ENCODE measurements at regions of chr3 and their contacts with region 1.

Region 1: GRCh38 chr3:189375532-189375931 is 203.8 kb downstream of the TPRG1 start:
- DNase-seq: no peak
- H3K4me3 ChIP-seq: no peak overlapping the region
- H3K27ac ChIP-seq: no peak overlapping the region
- H3K4me1 ChIP-seq: no peaks in the 10 kb centered on the region
- H3K27me3 ChIP-seq: no peaks in the 10 kb centered on the region
- CTCF ChIP-seq: no peak
- EP300 ChIP-seq: no peak
- POLR2A ChIP-seq: no peak

Region 2: DNA sequence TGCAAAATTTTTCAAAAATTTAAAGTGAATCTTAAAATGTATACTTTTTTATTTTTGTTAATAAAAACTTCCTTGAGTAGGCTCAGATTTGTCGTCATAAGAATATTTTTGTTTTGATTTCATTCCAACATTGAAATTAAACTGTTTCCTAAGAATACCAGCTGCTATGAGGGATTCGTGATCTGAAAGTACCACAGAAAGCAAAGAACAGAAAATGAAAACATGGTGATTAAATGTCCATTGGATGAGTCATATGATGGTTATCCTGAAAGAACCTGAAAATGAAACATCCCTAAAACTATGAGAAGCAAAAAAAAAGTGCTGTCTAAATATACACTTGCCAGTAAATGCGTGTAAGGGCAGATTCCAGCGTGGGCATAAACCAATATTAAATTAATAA is 1343.1 kb after region 1 on chr3:
- in situ Hi-C with region 1: no loop called
- intact Hi-C with region 1: loop called (anchors 5 kb)
- DNase-seq: no peak
- H3K4me3 ChIP-seq: no peak overlapping the region
- H3K27ac ChIP-seq: no peak overlapping the region
- H3K4me1 ChIP-seq: no peaks in the 10 kb centered on the region
- H3K27me3 ChIP-seq: no peaks in the 10 kb centered on the region
- CTCF ChIP-seq: no peak
- EP300 ChIP-seq: no peak
- POLR2A ChIP-seq: no peak